Natural killer cell (primary cell): ENCODE measurements at regions of chr9 and their contacts with region 1.

Region 1: DNA sequence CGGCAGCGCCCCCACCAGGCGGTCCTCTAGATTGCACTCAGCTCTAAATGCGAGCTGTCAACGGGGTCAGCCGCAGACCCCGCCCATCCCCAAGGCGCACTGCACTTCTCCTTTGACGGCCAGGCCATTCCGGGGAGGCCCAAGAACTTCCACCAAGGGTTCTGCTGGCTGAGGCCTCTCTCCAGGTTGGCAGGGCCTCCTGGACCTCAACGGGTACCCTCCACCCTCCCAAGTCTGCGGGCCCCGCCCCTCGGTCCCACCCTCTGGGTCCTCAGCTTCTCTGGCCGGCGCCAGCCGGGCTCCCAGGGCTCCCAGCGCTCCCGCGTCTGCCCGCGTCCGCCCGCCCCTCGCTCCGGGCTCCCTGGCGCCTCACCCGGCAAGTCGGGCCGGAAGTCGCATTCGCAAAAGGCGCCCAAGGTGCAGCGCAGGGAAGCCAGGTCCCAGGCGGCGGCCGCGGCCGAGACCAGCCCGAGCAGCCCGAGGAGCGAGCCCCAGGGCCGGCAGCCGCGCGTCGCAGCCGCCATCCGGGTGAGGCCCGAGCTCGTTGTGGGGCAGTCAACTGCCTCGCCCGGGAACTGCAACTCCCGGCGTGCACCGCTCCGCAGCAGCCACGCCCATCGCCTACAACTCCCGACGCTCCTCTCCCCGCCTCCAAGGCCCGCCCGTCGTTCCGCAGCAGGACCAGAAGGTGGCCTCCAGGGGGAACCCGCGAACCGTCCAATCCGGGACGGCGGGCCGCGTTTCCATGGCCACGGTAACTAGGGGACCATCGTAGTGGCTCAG is at the start of gene TOR2A:
- DNase-seq: peak; percentile 100
- ATAC-seq: peak; percentile 90 to 98 (median 90)
- H3K4me3 ChIP-seq: peak within 1 kb of the TSS; percentile 50
- H3K4me3 Mint-ChIP-seq: peak within 1 kb of the TSS; percentile 92
- H3K27ac ChIP-seq: peak within 1 kb of the TSS; percentile 93
- H3K27ac Mint-ChIP-seq: peak within 1 kb of the TSS; percentile 93 to 96
- H3K4me1 ChIP-seq: peaks cover 22% of the 10 kb centered on the region
- H3K4me1 Mint-ChIP-seq: peaks cover 5 to 24% of the 10 kb centered on the region in 2 donors
- H3K27me3 ChIP-seq: no peaks in the 10 kb centered on the region
- H3K27me3 Mint-ChIP-seq: no peaks in the 10 kb centered on the region
- CTCF ChIP-seq: peak; percentile 71
- total RNA-seq, gene TOR2A: 20.9 to 27.8 (median 23.7) TPM

Region 2: DNA sequence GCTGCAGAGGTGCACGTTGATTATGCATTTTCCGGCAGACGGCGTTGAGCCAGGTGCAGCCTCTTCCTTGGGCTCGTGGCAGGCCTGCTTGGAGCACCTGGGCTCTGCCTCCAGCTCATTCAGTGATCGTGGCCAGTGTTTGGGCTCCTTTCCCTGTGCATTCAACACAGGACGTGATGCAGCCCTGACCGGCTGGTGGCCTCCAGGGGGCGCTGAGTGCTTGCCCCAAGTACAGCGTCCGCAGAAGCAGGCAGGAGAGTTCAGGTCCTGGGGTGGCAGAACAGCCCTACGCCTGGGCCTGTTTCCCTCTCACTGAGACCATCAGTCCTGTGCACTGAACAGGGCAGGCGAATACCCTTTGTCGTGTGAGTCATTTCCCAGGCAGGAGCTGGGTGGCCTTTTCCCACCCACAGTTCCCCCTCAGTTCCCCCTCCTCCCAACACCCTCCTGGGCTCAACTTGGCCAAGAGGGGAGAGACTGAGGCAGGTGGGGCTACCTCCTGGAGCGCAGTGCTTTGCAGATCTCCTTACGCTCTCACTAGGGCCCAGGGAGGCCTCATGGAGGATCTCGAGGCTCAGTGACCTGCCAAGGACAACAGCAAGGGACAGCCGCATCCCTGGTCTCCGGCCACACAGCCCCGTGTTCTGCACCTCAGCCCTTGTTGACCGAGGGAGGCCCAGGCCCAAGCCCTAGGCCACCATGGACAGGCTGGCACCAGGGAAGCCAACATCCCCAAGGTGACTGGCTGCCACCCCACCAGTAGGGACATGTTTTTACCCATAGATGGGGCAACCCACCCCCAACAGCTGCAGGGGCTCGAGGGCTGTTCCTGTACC is 230.8 kb before region 1 on chr9:
- intact Hi-C with region 1: loop called (anchors 1 kb)
- DNase-seq: peak; percentile 78 to 89
- ATAC-seq: peak; percentile 76 to 98 (median 88)
- H3K4me3 ChIP-seq: no peak overlapping the region
- H3K4me3 Mint-ChIP-seq: no peak overlapping the region
- H3K27ac ChIP-seq: no peak overlapping the region
- H3K27ac Mint-ChIP-seq: no peak overlapping the region
- H3K4me1 ChIP-seq: no peaks in the 10 kb centered on the region
- H3K4me1 Mint-ChIP-seq: no peaks in the 10 kb centered on the region
- H3K27me3 ChIP-seq: no peaks in the 10 kb centered on the region
- H3K27me3 Mint-ChIP-seq: no peaks in the 10 kb centered on the region
- CTCF ChIP-seq: peak; percentile 79

Region 3: DNA sequence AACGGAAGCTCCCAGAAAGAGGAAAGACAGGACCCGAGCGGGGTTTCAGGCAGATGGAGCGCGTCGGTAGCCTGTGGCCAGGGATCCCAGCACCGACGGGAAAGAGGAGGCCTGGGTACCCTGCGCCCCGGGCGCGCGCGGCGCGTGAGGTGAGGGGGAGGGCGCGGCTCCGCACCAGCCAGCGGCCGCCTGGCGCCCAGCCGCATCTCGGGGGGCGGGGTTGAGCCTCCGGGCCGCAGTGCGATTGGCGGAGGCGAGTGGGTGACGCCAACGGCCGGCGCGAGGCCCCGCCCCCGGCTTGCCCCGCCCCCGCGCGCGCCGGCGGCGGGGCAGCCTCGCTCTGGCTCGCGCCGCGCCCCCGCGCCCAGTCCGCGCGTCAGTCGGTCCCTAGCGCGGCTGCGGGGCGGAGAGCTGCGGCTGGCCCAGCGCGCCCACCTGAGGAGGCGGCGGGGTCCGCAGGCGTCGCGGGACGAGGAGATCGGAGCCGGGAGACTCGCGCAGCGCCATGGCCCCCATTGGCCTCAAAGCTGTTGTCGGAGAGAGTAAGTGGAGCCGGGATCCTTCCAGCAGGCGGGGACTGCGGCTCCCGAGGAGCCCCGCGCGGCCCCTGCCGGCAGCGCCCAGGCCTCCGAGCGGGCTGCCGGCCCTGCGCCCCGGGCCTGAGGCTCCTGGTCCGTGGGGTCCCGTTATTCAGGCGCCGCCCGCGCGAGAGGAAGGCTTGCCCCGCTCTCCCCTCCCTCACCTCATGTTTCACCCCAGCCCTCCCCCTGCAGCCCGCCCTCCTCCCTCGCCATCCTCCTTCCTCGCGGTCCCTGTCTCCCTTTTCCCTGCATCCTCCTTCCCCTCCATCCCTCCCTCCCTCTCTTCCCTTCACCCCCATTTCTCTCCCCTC is 122.8 kb before region 1 on chr9 and contains the start of gene STXBP1:
- intact Hi-C with region 1: loop called (anchors 10 kb)
- DNase-seq: peak; percentile 87 to 93
- ATAC-seq: peak; percentile 92 to 95 (median 93)
- H3K4me3 ChIP-seq: peak within 1 kb of the TSS; percentile 66
- H3K4me3 Mint-ChIP-seq: peak within 1 kb of the TSS; percentile 98
- H3K27ac ChIP-seq: no peak within 1 kb of the TSS
- H3K27ac Mint-ChIP-seq: peak within 1 kb of the TSS; percentile 73 to 77
- H3K4me1 ChIP-seq: peaks cover 32% of the 10 kb centered on the region
- H3K4me1 Mint-ChIP-seq: peaks cover 27 to 37% of the 10 kb centered on the region in 2 donors
- H3K27me3 ChIP-seq: peaks cover 27% of the 10 kb centered on the region
- H3K27me3 Mint-ChIP-seq: peaks cover 38 to 54% of the 10 kb centered on the region in 2 donors
- CTCF ChIP-seq: no peak
- total RNA-seq, gene STXBP1: 0.97 to 1.8 (median 1.6) TPM

Region 4: DNA sequence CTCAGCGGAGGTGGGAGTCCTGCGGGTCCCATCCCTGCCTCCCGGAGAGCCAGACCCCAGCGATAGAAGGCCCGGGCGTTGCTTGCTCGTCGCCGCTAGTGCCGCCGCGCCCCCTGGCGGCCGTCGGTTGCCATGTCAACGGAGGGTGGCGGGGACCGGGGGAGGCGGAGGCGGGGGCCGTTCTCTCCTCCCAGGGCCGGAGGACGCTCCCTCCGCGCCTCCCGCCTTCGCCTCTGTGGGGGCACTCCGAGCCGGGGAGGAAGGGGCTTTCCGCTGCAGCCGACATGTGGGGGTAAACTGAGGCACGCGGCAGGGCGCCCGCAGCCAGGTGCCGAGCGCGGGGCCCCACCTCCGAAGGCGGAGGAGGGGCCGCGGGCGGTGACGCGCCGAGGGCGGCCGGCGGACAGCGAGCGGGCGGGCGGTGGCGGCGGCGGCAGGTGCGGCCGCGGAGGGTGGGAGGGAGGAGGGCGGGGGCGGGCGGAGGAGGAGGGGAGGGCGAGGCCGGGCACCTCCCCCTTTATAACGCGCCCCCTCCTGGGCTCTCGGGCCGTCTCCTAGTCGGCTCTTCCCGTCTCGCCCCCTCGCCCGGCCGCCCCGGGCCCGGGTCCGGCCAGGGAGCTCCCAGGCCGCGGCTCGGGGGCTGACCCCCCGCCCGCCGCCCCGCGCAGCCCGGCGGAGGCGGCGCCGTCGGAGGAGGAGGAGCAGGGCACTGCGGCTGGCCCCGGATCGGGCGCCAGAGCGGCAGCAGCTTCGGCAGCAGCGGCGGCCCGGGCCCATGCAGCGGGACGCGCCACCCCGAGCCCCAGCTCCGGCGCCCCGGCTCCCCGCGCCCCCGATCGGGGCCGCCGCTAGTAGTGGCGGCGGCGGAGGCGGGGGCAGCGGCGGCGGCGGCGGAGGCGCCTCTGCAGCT is 50.3 kb after region 1 on chr9:
- intact Hi-C with region 1: loop called (anchors 1 kb)
- DNase-seq: peak; percentile 91 to 94
- ATAC-seq: peak; percentile 44 to 67 (median 56)
- H3K4me3 ChIP-seq: peak overlapping the region; percentile 46
- H3K4me3 Mint-ChIP-seq: peak overlapping the region; percentile 93
- H3K27ac ChIP-seq: peak overlapping the region; percentile 88
- H3K27ac Mint-ChIP-seq: peak overlapping the region; percentile 95 to 98
- H3K4me1 ChIP-seq: peaks cover 68% of the 10 kb centered on the region
- H3K4me1 Mint-ChIP-seq: peaks cover 50 to 74% of the 10 kb centered on the region in 2 donors
- H3K27me3 ChIP-seq: no peaks in the 10 kb centered on the region
- H3K27me3 Mint-ChIP-seq: no peaks in the 10 kb centered on the region
- CTCF ChIP-seq: peak; percentile 80

Region 5: DNA sequence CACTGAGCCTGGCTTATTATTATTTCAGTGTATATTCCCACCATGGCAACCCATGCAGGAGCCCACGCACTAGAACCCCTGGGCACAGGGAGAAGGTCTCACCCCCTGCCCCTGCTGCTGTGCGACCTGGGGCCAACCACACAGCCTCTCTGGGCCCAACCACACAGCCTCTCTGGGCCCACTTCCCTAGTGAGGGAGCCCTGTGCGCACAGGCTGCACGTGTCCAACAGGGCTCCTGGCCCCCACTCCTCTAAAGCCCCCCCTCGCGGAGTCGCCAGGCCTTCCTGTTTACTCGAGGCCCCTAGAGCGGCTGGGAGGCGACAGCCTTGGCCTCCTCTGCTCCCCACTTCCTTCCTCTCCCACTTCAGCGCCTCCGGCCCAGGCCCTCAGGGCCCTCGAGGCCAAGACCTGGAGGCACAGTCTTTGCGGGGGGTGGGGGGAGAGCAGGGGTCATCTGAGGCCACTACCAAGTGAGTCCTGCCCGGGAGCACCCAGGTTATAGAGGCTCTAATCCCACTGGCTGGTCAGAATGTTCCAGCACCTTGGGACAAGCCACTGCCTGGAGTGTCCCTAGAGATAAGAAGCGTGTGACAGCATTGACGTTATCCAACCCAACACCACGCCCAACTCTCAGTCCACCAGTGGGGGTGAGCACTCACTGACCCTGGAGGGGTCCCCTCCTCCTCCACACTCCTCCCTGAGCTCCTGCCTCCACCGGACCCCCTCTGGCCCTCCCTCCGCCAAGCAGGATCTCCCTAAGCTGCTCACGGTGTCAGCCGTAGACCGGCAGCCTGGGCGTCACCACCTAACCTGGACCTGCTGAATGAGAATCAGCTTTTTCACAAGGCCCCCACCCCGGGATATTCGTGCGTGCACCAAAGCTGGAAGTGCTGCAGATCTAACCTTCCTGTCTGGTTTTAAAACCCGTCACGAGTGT is 127.4 kb after region 1 on chr9:
- intact Hi-C with region 1: loop called (anchors 2 kb)
- DNase-seq: peak; percentile 63 to 68
- ATAC-seq: peak; percentile 78 to 93 (median 82)
- H3K4me3 ChIP-seq: no peak overlapping the region
- H3K4me3 Mint-ChIP-seq: peak overlapping the region; percentile 49
- H3K27ac ChIP-seq: peak overlapping the region; percentile 87
- H3K27ac Mint-ChIP-seq: peak overlapping the region; percentile 85 to 96
- H3K4me1 ChIP-seq: peaks cover 75% of the 10 kb centered on the region
- H3K4me1 Mint-ChIP-seq: peaks cover 19 to 55% of the 10 kb centered on the region in 2 donors
- H3K27me3 ChIP-seq: no peaks in the 10 kb centered on the region
- H3K27me3 Mint-ChIP-seq: no peaks in the 10 kb centered on the region
- CTCF ChIP-seq: no peak

Region 6: GRCh38 chr9:127916665-127917613 is 182.0 kb after region 1 on chr9 and contains the start of gene ST6GALNAC4:
- intact Hi-C with region 1: loop called (anchors 5 kb)
- DNase-seq: peak; percentile 93 to 96
- ATAC-seq: peak; percentile 97 to 99 (median 98)
- H3K4me3 ChIP-seq: peak within 1 kb of the TSS; percentile 84
- H3K4me3 Mint-ChIP-seq: peak within 1 kb of the TSS; percentile 79
- H3K27ac ChIP-seq: peak within 1 kb of the TSS; percentile 76
- H3K27ac Mint-ChIP-seq: peak within 1 kb of the TSS in 1 of 2 donors; percentile 74
- H3K4me1 ChIP-seq: peaks cover 62% of the 10 kb centered on the region
- H3K4me1 Mint-ChIP-seq: peaks cover 15 to 40% of the 10 kb centered on the region in 2 donors
- H3K27me3 ChIP-seq: no peaks in the 10 kb centered on the region
- H3K27me3 Mint-ChIP-seq: no peaks in the 10 kb centered on the region
- CTCF ChIP-seq: no peak
- total RNA-seq, gene ST6GALNAC4: 18.8 to 33.0 (median 20.4) TPM

Region 7: DNA sequence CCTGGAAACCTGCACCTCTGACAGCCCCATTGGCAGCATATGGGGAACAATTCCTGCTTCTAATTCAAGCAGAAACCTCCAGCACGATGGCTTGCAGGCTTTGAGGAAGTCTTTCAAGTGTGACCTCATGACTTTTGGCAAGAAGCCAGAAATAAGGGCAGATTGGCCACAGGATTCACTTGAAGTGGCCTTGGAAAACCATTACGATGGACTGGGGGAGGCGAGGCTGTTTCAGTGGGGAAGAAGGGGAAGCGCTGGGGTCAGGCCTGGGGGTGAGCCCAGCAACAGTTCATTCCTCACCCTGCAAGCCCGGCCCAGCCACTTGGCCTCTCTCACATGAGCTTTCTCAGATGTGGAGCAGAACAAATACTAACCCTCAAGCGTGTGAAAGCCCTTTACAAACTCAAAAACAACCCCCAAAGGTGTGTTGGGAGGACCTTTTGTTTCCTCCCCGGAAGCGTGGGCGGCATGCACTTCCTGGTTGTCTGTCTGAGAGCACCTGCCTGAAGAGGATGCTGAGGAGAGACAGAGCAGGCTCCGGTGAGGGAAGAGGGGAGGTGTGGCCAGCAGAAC is 272.7 kb after region 1 on chr9:
- intact Hi-C with region 1: no loop called
- DNase-seq: peak; percentile 29 to 95
- ATAC-seq: peak; percentile 68 to 80 (median 68)
- H3K4me3 ChIP-seq: no peak overlapping the region
- H3K4me3 Mint-ChIP-seq: peak overlapping the region; percentile 63
- H3K27ac ChIP-seq: peak overlapping the region; percentile 63
- H3K27ac Mint-ChIP-seq: peak overlapping the region; percentile 86
- H3K4me1 ChIP-seq: peaks cover 43% of the 10 kb centered on the region
- H3K4me1 Mint-ChIP-seq: peaks cover 15 to 21% of the 10 kb centered on the region in 2 donors
- H3K27me3 ChIP-seq: no peaks in the 10 kb centered on the region
- H3K27me3 Mint-ChIP-seq: no peaks in the 10 kb centered on the region
- CTCF ChIP-seq: no peak

Region 8: DNA sequence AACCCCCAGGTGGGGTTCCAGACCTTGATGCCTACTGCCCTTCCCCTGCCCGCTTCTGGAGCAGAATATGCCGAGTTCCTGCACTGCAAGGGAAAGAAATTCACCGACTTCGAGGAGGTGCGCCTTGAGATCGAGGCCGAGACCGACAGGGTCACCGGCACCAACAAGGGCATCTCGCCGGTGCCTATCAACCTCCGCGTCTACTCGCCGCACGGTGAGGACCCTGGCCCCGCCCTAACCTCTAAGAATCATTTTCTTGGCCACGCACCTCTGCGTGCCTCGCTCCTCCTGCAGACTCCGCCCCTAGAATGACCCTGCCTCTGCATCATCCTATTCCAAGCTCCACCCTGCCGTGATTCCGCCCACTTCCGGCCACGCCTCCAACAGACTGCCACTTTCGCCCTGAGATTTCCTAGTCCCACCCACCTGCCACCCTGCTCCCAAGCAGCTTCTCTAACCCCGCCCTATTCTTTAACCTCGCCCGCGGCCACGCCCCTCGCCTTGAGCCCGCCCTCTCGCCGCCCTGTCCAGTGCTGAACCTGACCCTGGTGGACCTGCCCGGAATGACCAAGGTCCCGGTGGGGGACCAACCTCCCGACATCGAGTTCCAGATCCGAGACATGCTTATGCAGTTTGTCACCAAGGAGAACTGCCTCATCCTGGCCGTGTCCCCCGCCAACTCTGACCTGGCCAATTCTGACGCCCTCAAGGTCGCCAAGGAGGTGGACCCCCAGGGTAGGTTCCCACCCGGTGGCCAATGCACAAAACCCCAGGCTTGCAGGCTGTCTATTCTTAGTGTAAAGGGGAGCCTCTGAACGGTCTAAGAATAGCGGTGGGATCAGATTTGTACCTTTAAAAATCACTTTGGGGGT is 483.8 kb after region 1 on chr9:
- intact Hi-C with region 1: no loop called
- DNase-seq: peak; percentile 84 to 94
- ATAC-seq: peak; percentile 94 to 97 (median 96)
- H3K4me3 ChIP-seq: peak overlapping the region; percentile 29
- H3K4me3 Mint-ChIP-seq: peak overlapping the region; percentile 84
- H3K27ac ChIP-seq: no peak overlapping the region
- H3K27ac Mint-ChIP-seq: peak overlapping the region; percentile 64 to 69
- H3K4me1 ChIP-seq: peaks cover 17% of the 10 kb centered on the region
- H3K4me1 Mint-ChIP-seq: peaks cover 11 to 12% of the 10 kb centered on the region in 2 donors
- H3K27me3 ChIP-seq: no peaks in the 10 kb centered on the region
- H3K27me3 Mint-ChIP-seq: peaks cover 0 to 4% of the 10 kb centered on the region in 2 donors
- CTCF ChIP-seq: no peak